ENCODE measurements at regions of chr11 and their contacts with region 1.

Region 1: DNA sequence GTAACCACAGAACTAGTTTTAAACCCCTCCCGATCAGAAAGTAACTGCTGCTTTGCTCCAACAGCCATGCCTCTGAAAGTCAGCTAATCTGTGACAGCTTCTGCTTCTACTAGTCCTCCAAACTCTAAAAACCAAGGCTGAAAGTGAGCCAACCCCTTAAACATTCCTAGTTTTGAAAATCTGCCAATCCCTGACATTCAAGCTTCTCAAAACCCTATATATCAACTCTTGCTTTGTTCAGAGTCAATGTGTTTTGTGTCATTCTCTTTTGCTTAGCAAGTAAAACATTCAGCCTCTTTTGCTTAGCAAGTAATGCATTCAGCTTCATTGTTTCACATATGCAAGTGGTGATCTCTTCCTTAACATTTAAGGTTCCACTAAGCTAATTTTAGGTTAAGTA is 56.9 kb downstream of the ATG16L2 start:
- DNase-seq: no peak
- ATAC-seq: no peak
- H3K4me3 ChIP-seq: no peak overlapping the region
- H3K27ac ChIP-seq: no peak overlapping the region
- H3K4me1 ChIP-seq: no peaks in the 10 kb centered on the region
- H3K27me3 ChIP-seq: no peaks in the 10 kb centered on the region
- CTCF ChIP-seq: no peak

Region 2: DNA sequence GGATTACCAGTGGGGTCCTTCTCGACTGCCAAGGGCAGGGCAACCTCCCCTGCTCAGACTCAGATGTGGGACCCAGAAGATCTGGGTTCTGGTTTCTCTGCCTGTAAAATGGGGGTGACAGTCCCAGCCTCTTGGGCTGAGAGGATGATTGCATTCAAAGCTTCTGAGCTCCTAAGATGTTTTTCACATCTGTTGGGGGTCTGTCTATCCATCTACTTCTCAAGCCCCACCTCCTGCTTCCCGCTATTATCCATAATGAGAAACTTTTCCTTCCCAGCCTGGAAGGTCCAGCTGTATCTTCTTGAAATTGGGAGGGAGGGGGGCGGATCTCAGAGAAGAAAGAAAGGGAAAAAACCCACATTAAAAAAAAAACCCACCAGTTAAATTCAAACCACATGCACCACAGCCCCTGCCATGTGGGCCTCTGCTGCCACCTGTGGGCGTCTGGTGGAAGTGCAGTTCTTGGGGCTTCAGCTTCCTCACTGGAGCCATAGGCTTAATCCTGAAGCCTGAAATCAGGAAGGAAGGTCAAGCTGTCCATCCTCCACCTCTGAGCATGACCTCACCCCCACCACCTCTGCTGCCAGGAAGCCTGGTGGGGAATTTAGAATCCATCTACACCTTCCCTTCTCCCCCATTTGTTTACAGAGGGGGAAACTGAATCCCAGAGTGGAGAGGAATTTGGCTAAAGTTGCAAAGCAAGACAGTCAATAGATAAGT is 464.2 kb after region 1 on chr11:
- CTCF ChIA-PET with region 1: interaction called, 10 read pairs
- POLR2A ChIA-PET with region 1: no interaction called
- intact Hi-C with region 1: no loop called
- DNase-seq: peak; percentile 94
- ATAC-seq: peak; percentile 80
- H3K4me3 ChIP-seq: no peak overlapping the region
- H3K27ac ChIP-seq: no peak overlapping the region
- H3K4me1 ChIP-seq: peaks cover 13% of the 10 kb centered on the region
- H3K27me3 ChIP-seq: no peaks in the 10 kb centered on the region
- CTCF ChIP-seq: peak; percentile 98

Measured in PC-3 (cell line).